Common myeloid progenitor, CD34-positive (primary cell): ENCODE measurements at regions of chr20 and their contacts with region 1.

Region 1: DNA sequence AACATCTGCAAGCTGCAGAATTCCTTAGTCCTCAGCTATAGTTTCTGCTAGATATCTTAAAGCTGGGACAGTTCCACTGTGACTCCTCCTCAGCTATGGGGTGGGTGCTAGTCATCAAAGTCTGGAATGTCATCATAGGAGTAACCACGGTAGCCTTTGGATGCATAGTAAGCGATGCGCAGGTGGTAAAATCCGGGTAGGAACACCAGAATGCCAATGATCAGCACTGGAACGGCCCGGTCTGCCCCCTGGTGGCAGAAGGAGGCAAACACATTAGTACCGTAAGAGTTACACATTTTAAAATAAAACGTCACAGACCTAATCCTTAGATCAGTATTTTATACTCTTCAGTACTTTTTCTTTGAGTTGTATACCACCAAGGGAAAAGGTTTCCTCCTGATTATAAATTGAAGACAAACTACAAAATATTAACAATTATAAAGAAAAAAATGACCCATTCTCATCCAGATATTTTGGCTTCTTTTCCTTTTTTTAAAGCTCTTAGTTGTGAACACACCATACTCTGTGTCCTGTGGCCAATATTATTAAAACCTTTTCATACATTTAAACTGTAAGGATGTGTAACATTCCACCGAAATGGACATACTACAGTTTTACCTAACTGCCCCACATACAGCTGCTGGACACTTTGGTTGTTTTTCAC is 18.9 kb downstream of the PCNA start:
- DNase-seq: peak; percentile 65 to 76 (median 68)
- H3K4me3 ChIP-seq: no peak overlapping the region
- H3K27ac ChIP-seq: peak overlapping the region in 1 of 2 experiments; percentile 6
- H3K4me1 ChIP-seq: no peaks in the 10 kb centered on the region
- H3K27me3 ChIP-seq: no peaks in the 10 kb centered on the region

Region 2: GRCh38 chr20:4956200-4956810 is 144.5 kb before region 1 on chr20:
- CTCF ChIA-PET with region 1: interaction called, 16 read pairs
- POLR2A ChIA-PET with region 1: no interaction called
- DNase-seq: peak; percentile 65 to 87 (median 81)
- H3K4me3 ChIP-seq: no peak overlapping the region
- H3K27ac ChIP-seq: no peak overlapping the region
- H3K4me1 ChIP-seq: no peaks in the 10 kb centered on the region
- H3K27me3 ChIP-seq: no peaks in the 10 kb centered on the region

Region 3: DNA sequence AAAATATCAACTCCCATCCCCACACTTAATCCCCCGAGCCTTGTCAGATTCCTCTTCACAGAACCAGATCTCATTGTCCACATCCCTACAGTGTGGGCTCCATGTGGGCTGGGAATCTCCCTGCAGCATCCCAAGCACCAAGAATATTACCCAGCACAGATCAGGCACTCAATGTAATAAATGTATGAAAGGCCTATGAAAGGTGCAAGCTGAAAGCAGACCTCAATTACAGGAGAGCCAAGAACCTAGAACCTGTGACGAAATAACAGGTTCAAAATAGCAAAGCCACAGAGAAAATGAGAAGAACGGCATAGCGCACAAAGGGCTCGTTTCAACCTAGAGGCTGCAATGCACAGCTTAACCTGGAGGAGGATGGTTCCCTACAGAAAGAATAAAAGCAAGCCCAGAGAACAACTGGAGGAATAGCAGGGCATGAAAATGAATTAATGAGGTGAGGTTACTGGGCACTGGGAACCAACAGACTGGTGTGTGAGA is 102.6 kb before region 1 on chr20:
- CTCF ChIA-PET with region 1: interaction called, 11 read pairs
- POLR2A ChIA-PET with region 1: no interaction called
- DNase-seq: peak; percentile 48 to 76 (median 75)
- H3K4me3 ChIP-seq: no peak overlapping the region
- H3K27ac ChIP-seq: no peak overlapping the region
- H3K4me1 ChIP-seq: peaks cover 0 to 28% (median 24%) of the 10 kb centered on the region in 4 experiments
- H3K27me3 ChIP-seq: no peaks in the 10 kb centered on the region

Region 4: GRCh38 chr20:5056801-5057599 is 43.8 kb before region 1 on chr20:
- CTCF ChIA-PET with region 1: interaction called, 11 read pairs
- POLR2A ChIA-PET with region 1: no interaction called
- DNase-seq: peak; percentile 75 to 86 (median 86)
- H3K4me3 ChIP-seq: no peak overlapping the region
- H3K27ac ChIP-seq: no peak overlapping the region
- H3K4me1 ChIP-seq: peaks cover 0 to 12% (median 4%) of the 10 kb centered on the region in 4 experiments
- H3K27me3 ChIP-seq: no peaks in the 10 kb centered on the region

Region 5: GRCh38 chr20:5072756-5073659 is 27.8 kb before region 1 on chr20:
- CTCF ChIA-PET with region 1: interaction called, 10 read pairs
- POLR2A ChIA-PET with region 1: no interaction called
- DNase-seq: peak in 1 of 3 donors; percentile 10
- H3K4me3 ChIP-seq: no peak overlapping the region
- H3K27ac ChIP-seq: no peak overlapping the region
- H3K4me1 ChIP-seq: peaks cover 3 to 29% (median 10%) of the 10 kb centered on the region in 4 experiments
- H3K27me3 ChIP-seq: no peaks in the 10 kb centered on the region

Region 6: GRCh38 chr20:5090191-5090590 is 10.6 kb before region 1 on chr20:
- CTCF ChIA-PET with region 1: interaction called, 12 read pairs
- POLR2A ChIA-PET with region 1: no interaction called
- DNase-seq: peak; percentile 39 to 87 (median 83)
- H3K4me3 ChIP-seq: peak overlapping the region in 4 of 7 experiments; percentile 4 to 43 (median 21)
- H3K27ac ChIP-seq: peak overlapping the region in 1 of 2 experiments; percentile 68
- H3K4me1 ChIP-seq: peaks cover 9 to 25% (median 18%) of the 10 kb centered on the region in 4 experiments
- H3K27me3 ChIP-seq: no peaks in the 10 kb centered on the region

Region 7: DNA sequence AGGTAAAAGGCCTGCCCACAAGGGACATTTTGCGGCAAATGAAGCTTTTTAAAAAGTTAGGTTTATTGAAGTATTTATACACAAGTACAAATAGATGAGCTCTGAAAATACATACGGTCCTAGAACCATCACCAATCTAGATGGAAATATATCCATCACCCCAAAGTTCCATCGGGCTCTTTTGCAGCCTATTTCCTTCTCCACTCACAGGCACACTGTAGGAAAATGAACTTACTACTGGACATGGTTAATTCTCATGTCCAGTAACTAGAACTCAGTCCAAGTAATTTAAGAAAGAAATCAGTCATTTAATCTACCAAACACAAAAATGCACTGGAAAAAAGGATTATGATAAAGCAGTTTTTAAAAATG is 12.8 kb after region 1 on chr20:
- CTCF ChIA-PET with region 1: no interaction called
- POLR2A ChIA-PET with region 1: no interaction called
- DNase-seq: no peak
- H3K4me3 ChIP-seq: peak overlapping the region; percentile 70 to 100 (median 95)
- H3K27ac ChIP-seq: peak overlapping the region; percentile 88 to 95
- H3K4me1 ChIP-seq: peaks cover 17 to 52% (median 28%) of the 10 kb centered on the region in 4 experiments
- H3K27me3 ChIP-seq: no peaks in the 10 kb centered on the region

Region 8: GRCh38 chr20:5191829-5192569 is 91.2 kb after region 1 on chr20:
- CTCF ChIA-PET with region 1: interaction called, 13 read pairs
- POLR2A ChIA-PET with region 1: no interaction called
- DNase-seq: peak; percentile 77 to 88 (median 83)
- H3K4me3 ChIP-seq: no peak overlapping the region
- H3K27ac ChIP-seq: no peak overlapping the region
- H3K4me1 ChIP-seq: peaks cover 0 to 5% (median 0%) of the 10 kb centered on the region in 4 experiments
- H3K27me3 ChIP-seq: no peaks in the 10 kb centered on the region